A673 (cell line): ENCODE measurements at regions of chr5 and their contacts with region 1.

Region 1: GRCh38 chr5:115246361-115246991 is 16.2 kb downstream of the PGGT1B start:
- DNase-seq: peak; percentile 64
- H3K4me3 ChIP-seq: no peak overlapping the region
- H3K27ac ChIP-seq: no peak overlapping the region
- H3K4me1 ChIP-seq: no peaks in the 10 kb centered on the region
- H3K27me3 ChIP-seq: no peaks in the 10 kb centered on the region
- CTCF ChIP-seq: peak; percentile 76

Region 2: DNA sequence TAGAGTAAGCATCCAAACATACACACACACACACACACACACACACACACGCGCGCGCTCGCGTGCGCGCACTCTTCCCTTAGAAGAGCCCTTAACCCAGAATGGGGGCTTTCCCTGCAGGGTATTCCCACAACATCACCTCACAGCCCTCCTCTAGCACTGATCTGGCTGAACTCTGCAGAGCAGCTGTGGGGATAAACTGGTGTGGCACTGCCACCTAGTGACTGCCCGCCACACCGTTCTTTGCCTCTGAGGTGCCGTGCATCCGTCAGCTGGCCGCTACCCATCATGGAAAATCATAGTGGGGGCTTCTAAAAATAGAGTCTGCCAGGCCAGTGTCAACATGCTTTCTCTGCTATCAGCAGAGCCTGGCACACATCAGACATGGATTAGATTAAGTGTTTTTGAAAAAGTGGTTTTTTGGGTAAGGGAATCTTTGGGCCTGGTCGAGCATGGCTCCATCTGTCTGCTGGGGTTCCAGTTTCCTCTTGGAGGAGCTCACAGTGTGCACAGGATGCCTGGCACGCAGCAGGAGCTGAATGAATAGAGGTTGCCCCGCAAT is 796.5 kb before region 1 on chr5:
- CTCF ChIA-PET with region 1: no interaction called
- POLR2A ChIA-PET with region 1: no interaction called
- intact Hi-C with region 1: loop called (anchors 5 kb)
- DNase-seq: peak; percentile 65
- H3K4me3 ChIP-seq: no peak overlapping the region
- H3K27ac ChIP-seq: no peak overlapping the region
- H3K4me1 ChIP-seq: no peaks in the 10 kb centered on the region
- H3K27me3 ChIP-seq: peaks cover 14% of the 10 kb centered on the region
- CTCF ChIP-seq: peak; percentile 87

Region 3: DNA sequence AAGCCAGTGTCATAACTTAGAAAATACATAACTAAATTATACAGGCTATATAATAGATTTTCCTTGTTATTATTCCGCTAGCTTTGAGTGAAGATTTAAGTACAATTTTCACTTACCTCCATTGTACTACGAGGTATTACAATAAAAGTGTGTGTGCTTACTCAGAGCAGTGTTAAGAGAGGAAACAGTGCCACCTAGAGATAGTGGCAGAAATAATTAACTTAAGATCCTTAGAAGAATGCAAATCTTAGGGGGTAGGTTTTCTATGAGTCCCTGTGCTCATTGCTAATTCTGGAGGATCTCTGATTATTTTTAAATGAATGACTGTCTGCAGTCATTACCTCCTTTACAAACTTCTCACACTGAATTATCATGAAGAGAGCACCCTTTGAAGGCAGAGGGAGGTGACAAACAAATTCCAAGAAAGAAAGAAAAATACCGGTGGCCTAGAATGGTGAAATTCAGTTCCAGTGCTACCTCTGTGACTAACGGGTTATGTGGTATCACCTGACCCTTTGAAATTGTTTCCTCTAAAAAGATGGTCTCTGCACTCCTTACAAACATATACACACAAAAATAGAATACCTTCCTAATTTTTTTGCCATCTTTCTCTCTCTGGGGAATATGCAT is 456.6 kb before region 1 on chr5:
- CTCF ChIA-PET with region 1: no interaction called
- POLR2A ChIA-PET with region 1: no interaction called
- intact Hi-C with region 1: loop called (anchors 10 kb)
- DNase-seq: peak; percentile 43
- H3K4me3 ChIP-seq: no peak overlapping the region
- H3K27ac ChIP-seq: no peak overlapping the region
- H3K4me1 ChIP-seq: no peaks in the 10 kb centered on the region
- H3K27me3 ChIP-seq: no peaks in the 10 kb centered on the region
- CTCF ChIP-seq: peak; percentile 60